Caco-2 (cell line): ENCODE measurements at regions of chr18 and their contacts with region 1.

Region 1: DNA sequence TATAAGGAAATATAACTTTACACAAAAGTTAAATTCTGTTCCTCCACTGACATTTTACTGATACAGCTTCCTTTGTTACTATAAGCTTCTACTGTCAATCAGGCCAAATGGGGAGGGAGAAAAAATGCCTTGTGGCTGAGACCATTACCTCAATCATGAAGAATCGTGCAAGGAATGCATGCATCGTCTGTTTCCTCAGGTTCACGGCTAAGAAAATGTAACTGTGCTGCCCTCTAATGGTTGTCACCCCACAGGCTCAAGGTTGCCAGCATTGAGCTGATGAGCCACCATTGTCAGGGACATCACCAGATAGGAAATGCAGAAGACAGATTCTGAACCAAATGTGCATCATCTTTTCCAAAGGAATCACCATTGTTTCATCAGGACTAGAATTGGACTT is 426.9 kb downstream of the CDH2 start:
- DNase-seq: peak in 1 of 2 experiments; percentile 25
- H3K4me3 ChIP-seq: no peak overlapping the region
- H3K4me3 Mint-ChIP-seq: no peak overlapping the region
- H3K27ac Mint-ChIP-seq: no peak overlapping the region
- H3K4me1 ChIP-seq: no peaks in the 10 kb centered on the region
- H3K4me1 Mint-ChIP-seq: no peaks in the 10 kb centered on the region
- H3K27me3 ChIP-seq: no peaks in the 10 kb centered on the region
- H3K27me3 Mint-ChIP-seq: no peaks in the 10 kb centered on the region
- CTCF ChIP-seq: no peak

Region 2: GRCh38 chr18:27605107-27605834 is 144.7 kb before region 1 on chr18:
- CTCF ChIA-PET with region 1: interaction called, 6 read pairs
- POLR2A ChIA-PET with region 1: no interaction called
- intact Hi-C with region 1: loop called (anchors 5 kb)
- DNase-seq: peak; percentile 32 to 46
- H3K4me3 ChIP-seq: no peak overlapping the region
- H3K4me3 Mint-ChIP-seq: no peak overlapping the region
- H3K27ac Mint-ChIP-seq: no peak overlapping the region
- H3K4me1 ChIP-seq: no peaks in the 10 kb centered on the region
- H3K4me1 Mint-ChIP-seq: peaks cover 7% of the 10 kb centered on the region
- H3K27me3 ChIP-seq: no peaks in the 10 kb centered on the region
- H3K27me3 Mint-ChIP-seq: no peaks in the 10 kb centered on the region
- CTCF ChIP-seq: peak; percentile 51 to 53

Region 3: GRCh38 chr18:27685807-27686412 is 64.1 kb before region 1 on chr18:
- CTCF ChIA-PET with region 1: interaction called, 5 read pairs
- POLR2A ChIA-PET with region 1: no interaction called
- intact Hi-C with region 1: loop called (anchors 1 kb)
- DNase-seq: peak in 1 of 2 experiments; percentile 31
- H3K4me3 ChIP-seq: no peak overlapping the region
- H3K4me3 Mint-ChIP-seq: no peak overlapping the region
- H3K27ac Mint-ChIP-seq: no peak overlapping the region
- H3K4me1 ChIP-seq: no peaks in the 10 kb centered on the region
- H3K4me1 Mint-ChIP-seq: no peaks in the 10 kb centered on the region
- H3K27me3 ChIP-seq: no peaks in the 10 kb centered on the region
- H3K27me3 Mint-ChIP-seq: no peaks in the 10 kb centered on the region
- CTCF ChIP-seq: peak; percentile 34 to 48